Endothelial cell of umbilical vein (primary cell): ENCODE measurements at regions of chr19 and their contacts with region 1.

Region 1: DNA sequence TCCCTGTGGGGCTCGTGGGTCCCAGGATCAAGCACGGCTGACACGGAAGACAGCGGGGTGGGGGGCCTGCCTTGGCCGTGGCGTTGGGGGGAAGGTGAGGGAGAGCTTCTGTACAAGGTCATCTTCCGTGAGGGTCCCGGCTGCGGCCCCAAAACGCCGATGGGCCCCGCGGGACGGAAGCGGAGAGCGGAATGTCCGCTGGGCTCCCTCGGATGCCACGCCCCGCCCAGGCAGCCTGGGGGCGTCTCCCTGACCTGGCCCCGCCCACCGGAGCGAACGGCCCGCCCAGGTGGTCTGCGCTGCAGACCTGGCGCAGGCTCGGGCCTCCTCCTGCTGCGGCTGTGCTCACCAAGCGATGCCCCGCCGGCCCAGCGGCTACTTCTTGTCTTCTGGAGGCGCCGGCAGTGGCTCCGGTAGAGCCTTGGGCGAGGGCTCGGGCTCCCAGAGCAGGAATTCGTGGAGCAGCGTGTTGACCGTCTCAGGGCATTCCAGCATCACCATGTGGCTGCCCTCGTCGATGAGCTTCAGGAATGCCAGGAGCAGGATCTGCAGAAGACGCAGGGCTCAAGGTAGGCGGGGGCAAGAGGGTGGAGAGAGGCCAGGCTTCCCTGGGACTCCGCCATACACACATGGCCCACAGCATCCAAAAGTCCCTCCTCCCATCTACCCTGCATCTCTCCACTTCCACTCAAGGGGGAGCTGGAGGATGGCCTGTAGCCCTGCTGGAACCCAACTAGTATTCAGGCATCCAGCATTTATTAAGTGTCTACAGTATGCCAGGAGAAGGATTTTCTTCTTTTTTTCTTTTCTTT is 10.7 kb downstream of the ABHD8 start:
- DNase-seq: peak; percentile 85
- H3K4me3 ChIP-seq: peak overlapping the region; percentile 36 to 51 (median 40)
- H3K27ac ChIP-seq: no peak overlapping the region
- H3K4me1 ChIP-seq: peaks cover 12% of the 10 kb centered on the region
- H3K27me3 ChIP-seq: no peaks in the 10 kb centered on the region
- CTCF ChIP-seq: peak; percentile 67
- POLR2A ChIP-seq: peak; percentile 82

Region 2: DNA sequence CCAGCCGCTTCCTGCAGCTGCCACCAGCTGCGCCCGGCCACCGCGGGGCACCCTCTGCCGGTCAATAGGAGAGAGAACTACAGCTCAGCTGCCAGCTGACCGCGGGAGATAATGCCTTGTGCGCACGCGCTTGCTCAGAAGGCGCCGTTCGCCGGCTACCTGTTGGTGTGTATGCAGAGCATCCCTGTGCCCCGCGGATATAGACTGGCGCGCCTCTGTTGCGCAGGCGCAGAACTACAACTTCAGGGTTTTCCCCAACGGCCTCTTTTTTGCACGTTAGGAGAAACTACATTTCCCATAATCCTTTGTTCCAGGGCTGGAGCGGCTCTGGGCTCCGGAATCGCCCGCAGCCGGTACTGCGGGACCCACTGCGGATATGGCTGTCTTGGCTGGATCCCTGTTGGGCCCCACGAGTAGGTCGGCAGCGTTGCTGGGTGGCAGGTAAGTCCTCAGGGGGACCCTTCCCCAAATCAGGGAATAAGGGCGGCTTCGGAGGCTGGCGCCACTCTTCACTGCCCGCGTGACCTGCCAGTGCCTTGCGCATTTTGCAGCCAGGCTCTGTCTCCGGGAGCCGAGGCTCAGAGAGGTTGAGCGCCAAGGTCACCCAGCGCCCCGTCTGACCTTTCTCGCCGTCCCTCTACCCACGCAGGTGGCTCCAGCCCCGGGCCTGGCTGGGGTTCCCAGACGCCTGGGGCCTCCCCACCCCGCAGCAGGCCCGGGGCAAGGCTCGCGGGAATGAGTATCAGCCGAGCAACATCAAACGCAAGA is 13.2 kb after region 1 on chr19 and contains the start of gene MRPL34:
- CTCF ChIA-PET with region 1: interaction called, 70 read pairs
- POLR2A ChIA-PET with region 1: interaction called, 3 read pairs
- dilution Hi-C with region 1: no loop called
- intact Hi-C with region 1: loop called (anchors 1 kb)
- DNase-seq: peak; percentile 99
- H3K4me3 ChIP-seq: peak within 1 kb of the TSS; percentile 44 to 72 (median 59)
- H3K27ac ChIP-seq: peak within 1 kb of the TSS; percentile 47
- H3K4me1 ChIP-seq: peaks cover 17% of the 10 kb centered on the region
- H3K27me3 ChIP-seq: no peaks in the 10 kb centered on the region
- CTCF ChIP-seq: peak; percentile 78 to 87
- POLR2A ChIP-seq: peak; percentile 86
- total RNA-seq, gene MRPL34: 55.7 and 61.6 TPM in 2 replicates

Region 3: DNA sequence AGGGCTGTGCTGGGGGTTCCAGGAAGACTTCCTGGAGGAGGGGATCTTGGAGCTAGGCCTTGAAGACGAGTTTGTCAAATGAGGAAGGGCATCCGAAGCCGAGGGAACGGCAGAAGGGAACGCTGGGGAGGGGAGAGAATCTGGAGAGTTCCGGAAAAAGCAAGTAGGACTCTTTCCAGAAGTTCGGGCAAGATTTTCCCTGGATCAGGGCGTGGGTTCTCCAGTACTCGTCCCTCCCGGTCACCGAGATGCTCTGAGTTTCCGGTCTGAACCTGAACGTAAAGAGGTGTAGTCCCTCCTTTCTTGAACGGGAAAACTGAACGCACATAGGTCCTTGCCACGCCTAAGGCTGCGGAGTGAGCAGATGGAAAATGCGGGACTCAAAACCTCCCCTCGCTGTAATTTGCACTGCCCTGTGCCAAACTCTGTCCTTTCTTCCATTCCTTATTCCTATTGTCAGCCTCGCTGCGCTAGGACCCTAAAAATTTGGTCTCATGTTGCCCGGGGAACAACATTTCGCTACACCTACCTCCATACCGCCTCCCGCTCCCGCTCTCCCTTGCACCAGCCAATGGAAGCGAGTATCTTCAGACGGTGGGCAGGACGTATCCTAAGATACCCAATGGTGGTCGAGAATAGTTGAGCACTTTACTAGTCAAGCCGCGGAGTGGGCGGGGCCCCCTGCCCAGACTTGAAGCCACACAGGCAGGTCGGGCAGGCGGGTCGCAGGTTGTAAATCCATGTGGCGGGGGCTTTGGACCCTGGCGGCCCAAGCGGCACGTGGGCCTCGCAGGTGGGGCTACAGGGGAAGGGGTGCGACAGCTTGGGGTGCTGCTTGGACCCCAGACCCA is 44.6 kb after region 1 on chr19 and contains the start of gene GTPBP3:
- CTCF ChIA-PET with region 1: interaction called, 5 read pairs
- POLR2A ChIA-PET with region 1: no interaction called
- dilution Hi-C with region 1: no loop called
- intact Hi-C with region 1: loop called (anchors 1 kb)
- DNase-seq: peak; percentile 97
- H3K4me3 ChIP-seq: peak within 1 kb of the TSS; percentile 83 to 89 (median 88)
- H3K27ac ChIP-seq: peak within 1 kb of the TSS; percentile 45
- H3K4me1 ChIP-seq: peaks cover 14% of the 10 kb centered on the region
- H3K27me3 ChIP-seq: no peaks in the 10 kb centered on the region
- CTCF ChIP-seq: no peak
- POLR2A ChIP-seq: peak; percentile 63
- total RNA-seq, gene GTPBP3: 28.1 and 34.7 TPM in 2 replicates

Region 4: DNA sequence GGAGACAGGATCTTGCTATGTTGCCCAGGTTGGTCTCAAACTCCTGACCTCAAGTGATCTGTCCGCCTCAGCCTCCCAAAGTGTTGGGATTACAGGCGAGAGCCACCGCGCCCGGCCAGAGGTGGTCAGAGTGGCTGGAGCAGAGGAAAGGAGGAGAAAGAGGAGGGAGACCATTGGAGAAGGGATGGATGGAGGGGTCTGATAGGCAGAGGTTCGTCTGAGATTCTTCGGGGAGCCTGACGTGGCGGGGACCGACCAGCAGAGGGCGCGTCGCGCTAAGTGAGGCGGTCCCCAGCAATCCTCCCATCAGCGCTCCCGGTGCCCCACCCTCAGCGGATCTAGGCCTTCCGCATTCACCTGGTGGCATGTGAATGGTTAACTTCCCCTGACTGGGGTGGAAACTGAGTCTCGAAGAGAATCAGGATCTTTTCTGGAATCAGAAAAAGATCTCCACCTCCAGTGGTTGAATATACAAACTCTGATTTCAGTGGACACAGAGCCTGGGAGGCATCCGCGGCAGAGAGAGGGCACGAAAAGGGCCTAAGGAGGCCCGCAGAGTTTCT is 53.7 kb after region 1 on chr19:
- CTCF ChIA-PET with region 1: interaction called, 6 read pairs
- POLR2A ChIA-PET with region 1: no interaction called
- dilution Hi-C with region 1: no loop called
- intact Hi-C with region 1: loop called (anchors 2 kb)
- DNase-seq: peak; percentile 62
- H3K4me3 ChIP-seq: no peak overlapping the region
- H3K27ac ChIP-seq: no peak overlapping the region
- H3K4me1 ChIP-seq: peaks cover 25% of the 10 kb centered on the region
- H3K27me3 ChIP-seq: no peaks in the 10 kb centered on the region
- CTCF ChIP-seq: peak; percentile 86 to 96
- POLR2A ChIP-seq: no peak